IMR-90 (cell line): ENCODE measurements at regions of chr1 and their contacts with region 1.

Region 1: DNA sequence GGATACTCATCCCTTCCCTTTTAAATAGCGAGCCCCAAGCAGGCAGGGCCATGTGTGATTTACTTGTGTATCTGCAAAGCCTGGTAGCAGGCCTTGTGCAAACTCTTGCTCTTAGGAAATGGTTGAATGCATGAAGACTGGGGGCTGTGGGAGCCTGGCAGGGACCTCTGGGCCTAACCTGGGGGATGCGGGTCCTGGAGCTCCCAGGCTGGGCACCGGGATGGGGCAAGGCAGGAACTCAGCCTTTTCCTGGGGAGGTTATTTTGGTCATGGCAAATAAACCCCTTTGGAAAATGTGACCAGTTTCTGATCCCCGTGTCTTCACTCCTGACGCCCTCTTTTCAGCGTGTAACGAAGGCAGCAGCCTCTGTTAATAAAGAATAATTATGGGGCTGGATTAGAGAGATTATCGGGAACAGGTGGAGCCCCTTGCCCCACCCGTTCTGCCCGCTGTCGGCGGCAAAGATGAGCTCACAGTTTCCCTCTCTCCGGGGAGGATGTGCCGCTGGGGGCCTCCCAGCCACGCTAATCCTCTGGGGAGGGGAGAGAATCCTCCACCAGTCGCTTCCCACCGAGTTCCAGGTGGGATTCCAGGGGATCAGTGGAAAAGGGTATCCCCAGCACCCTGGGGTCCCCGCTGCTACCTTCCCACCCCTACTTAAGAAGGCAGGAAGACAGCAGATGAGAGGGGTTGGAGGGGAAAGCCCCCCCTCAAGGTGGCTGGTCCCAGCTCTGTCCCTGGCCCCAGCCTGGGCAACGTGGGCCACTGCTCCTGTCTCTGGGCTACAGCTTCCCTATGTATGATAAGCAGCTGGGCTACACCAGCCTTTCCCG is 69.7 kb upstream of the WNT4 start:
- DNase-seq: no peak
- ATAC-seq: no peak
- H3K4me3 ChIP-seq: no peak overlapping the region
- H3K27ac ChIP-seq: no peak overlapping the region
- H3K4me1 ChIP-seq: no peaks in the 10 kb centered on the region
- H3K27me3 ChIP-seq: peaks cover 74% of the 10 kb centered on the region
- CTCF ChIP-seq: no peak
- POLR2A ChIP-seq: no peak
- RAD21 ChIP-seq: no peak

Region 2: GRCh38 chr1:22182715-22183114 is 29.9 kb before region 1 on chr1:
- CTCF ChIA-PET with region 1: no interaction called
- POLR2A ChIA-PET with region 1: no interaction called
- dilution Hi-C with region 1: no loop called
- in situ Hi-C with region 1: no loop called
- intact Hi-C with region 1: loop called (anchors 1 kb)
- DNase-seq: no peak
- ATAC-seq: no peak
- H3K4me3 ChIP-seq: no peak overlapping the region
- H3K27ac ChIP-seq: no peak overlapping the region
- H3K4me1 ChIP-seq: no peaks in the 10 kb centered on the region
- H3K27me3 ChIP-seq: peaks cover 40% of the 10 kb centered on the region
- CTCF ChIP-seq: no peak
- POLR2A ChIP-seq: no peak
- RAD21 ChIP-seq: no peak

Region 3: DNA sequence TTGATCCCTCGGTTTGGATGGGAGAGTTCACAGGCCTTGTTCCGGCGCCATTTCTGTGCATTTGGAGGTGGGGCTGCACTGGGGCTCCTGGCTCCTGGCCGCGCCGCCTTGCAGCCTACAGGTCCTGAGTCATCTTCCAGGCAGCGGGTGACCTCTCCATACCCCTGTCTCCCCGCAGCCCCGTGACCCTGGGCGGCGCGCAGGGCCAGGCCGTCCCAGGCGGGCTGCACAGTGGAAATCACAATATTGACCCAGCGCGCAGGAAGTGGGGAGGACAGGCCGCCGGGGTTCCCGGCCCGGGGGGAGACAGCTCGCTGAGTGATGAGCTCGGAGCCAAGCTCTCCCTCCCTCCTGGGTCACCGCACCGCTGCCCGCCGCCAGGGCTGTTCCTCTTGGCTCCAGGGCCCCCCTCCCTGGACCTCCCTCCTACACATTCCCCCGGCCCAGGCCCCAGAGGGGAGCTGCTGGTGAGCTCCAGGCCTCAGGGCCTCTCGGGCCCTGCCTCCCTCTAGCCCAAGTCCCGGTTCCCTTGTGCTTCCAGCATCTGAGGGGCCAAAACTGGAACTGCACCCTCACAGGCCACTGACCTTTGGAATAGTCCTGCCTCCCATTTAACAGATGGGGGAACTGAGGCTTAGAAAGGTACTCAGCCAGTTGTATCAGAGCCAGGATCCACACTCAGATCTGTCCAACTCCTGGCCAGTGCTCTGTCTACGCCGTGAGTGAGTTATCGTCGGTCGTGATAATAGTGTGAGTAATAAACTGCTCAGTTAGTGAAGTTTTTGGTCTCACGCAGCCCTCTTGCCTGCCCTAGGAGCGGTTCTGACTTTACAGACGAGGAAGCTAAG is 73.2 kb after region 1 on chr1:
- CTCF ChIA-PET with region 1: no interaction called
- POLR2A ChIA-PET with region 1: no interaction called
- dilution Hi-C with region 1: no loop called
- in situ Hi-C with region 1: no loop called
- intact Hi-C with region 1: no loop called
- DNase-seq: no peak
- ATAC-seq: no peak
- H3K4me3 ChIP-seq: no peak overlapping the region
- H3K27ac ChIP-seq: no peak overlapping the region
- H3K4me1 ChIP-seq: no peaks in the 10 kb centered on the region
- H3K27me3 ChIP-seq: peaks cover 60% of the 10 kb centered on the region
- CTCF ChIP-seq: no peak
- POLR2A ChIP-seq: no peak
- RAD21 ChIP-seq: no peak